ENCODE measurements at regions of chr12 and their contacts with region 1.

Region 1: DNA sequence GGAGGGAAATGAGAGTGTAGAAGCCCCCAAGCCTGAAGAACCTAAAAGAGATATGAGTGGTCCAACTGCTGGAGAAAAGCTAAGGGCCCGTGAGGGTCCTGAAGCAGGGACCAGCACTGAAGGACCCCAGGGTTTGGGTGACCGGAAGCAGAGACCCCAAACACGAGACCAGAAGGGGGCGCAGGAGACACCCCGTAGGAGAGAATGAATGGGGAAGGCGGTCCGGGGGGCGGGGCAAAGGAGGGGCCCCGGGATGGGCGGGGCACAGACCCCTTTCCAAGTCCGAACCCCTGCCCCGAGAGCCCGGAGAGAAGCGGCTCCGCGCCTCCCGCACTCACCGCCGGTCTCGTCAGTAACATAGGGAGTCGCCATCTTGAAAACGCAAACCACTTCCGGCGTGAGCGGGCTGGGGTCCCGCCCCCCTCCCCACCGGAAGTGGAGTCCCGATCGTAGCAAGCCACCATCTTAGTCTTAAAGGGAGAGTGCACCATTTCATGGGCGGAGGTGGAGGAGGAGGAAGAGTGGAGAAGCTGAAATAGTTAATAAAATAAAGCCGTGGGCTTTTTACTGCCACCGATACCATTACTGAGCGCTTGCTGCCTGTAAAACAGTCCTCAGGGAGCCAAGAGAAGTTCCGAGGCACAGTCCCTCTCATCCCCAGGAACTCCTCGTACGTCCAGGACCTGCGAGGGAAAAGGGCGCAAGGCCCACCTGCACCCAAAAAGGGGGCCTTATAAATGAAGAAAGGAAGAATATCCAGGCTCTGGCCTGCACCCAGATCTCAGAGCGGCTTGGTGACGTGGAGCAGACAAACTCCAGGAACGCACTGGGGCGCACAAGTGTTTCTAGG is 731 bp downstream of the PYM1 start:
- DNase-seq: peak; percentile 92 to 94
- ATAC-seq: peak; percentile 92
- H3K4me3 ChIP-seq: peak overlapping the region; percentile 67 to 92
- H3K27ac ChIP-seq: peak overlapping the region; percentile 34 to 98
- H3K4me1 ChIP-seq: peaks cover 0 to 3% of the 10 kb centered on the region in 2 donors
- H3K27me3 ChIP-seq: no peaks in the 10 kb centered on the region

Region 2: DNA sequence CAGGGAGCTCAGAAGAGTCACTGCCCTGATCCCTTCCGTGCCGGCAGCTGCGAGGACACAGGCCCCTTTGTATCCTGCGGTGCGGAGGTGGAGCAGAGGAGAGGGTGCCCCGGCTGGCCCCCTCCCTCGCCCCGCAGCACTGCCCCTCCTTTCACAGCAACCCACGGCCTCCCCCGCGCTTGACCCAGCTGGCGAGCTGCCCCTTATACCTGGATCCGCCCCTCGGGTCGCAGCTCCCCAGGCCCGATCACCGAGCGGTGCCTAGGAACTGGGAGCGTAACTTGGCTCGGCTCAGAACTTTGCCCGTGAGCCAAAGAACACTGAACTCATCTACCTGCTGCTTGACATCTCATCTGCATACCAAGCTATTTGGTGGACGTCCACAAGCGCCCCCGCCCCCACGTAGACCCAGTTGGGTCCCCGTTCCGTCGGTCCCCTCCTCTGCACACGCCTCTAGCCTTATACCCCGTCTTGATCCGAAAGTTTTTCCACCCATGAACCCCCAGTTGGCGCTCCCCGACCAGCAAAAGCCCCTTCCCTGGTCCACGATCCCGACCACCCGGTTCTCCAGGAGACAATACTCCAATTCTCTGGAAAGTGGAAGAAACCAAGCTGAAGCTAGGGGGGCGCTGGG is 96.9 kb before region 1 on chr12:
- intact Hi-C with region 1: loop called (anchors 2 to 5 kb)
- DNase-seq: peak; percentile 69 to 86
- ATAC-seq: peak; percentile 57
- H3K4me3 ChIP-seq: peak overlapping the region; percentile 77 to 79
- H3K27ac ChIP-seq: peak overlapping the region; percentile 78 to 91
- H3K4me1 ChIP-seq: peaks cover 0 to 3% of the 10 kb centered on the region in 2 donors
- H3K27me3 ChIP-seq: no peaks in the 10 kb centered on the region

Region 3: GRCh38 chr12:55847603-55848291 is 79.2 kb before region 1 on chr12:
- intact Hi-C with region 1: loop called in 1 of 2 experiments (anchors 5 kb)
- DNase-seq: peak; percentile 96
- ATAC-seq: peak; percentile 95
- H3K4me3 ChIP-seq: no peak overlapping the region
- H3K27ac ChIP-seq: peak overlapping the region; percentile 97 to 100
- H3K4me1 ChIP-seq: peaks cover 0 to 2% of the 10 kb centered on the region in 2 donors
- H3K27me3 ChIP-seq: no peaks in the 10 kb centered on the region

Region 4: GRCh38 chr12:55973598-55974307 is 46.8 kb after region 1 on chr12 and contains the start of gene RAB5B:
- intact Hi-C with region 1: loop called in 1 of 2 experiments (anchors 5 kb)
- DNase-seq: peak; percentile 98 to 100
- ATAC-seq: peak; percentile 97
- H3K4me3 ChIP-seq: peak within 1 kb of the TSS; percentile 78 to 98
- H3K27ac ChIP-seq: peak within 1 kb of the TSS in 1 of 2 donors; percentile 94
- H3K4me1 ChIP-seq: peaks cover 0 to 3% of the 10 kb centered on the region in 2 donors
- H3K27me3 ChIP-seq: no peaks in the 10 kb centered on the region
- total RNA-seq, gene RAB5B: 115 to 126 TPM

Region 5: DNA sequence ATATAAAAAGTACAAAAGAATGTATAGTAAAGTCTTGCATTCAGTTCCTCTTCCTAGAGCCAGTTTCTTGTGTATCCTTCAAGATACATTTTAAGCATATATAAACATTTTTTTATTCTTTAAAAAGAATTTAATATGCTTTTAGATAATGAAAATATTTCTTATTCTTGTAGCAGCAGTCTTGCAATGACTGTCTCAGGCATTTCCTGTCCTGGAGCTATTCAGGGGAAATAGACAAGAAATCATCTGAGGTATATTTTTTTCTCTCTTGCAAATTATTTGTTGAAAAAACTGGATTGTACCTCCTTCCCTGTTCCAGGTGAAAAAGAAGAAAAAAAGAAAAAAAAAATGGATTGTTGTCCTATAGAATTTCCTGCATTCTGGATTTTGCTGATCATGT is 136.0 kb after region 1 on chr12:
- intact Hi-C with region 1: no loop called
- DNase-seq: no peak
- ATAC-seq: no peak
- H3K4me3 ChIP-seq: no peak overlapping the region
- H3K27ac ChIP-seq: no peak overlapping the region
- H3K4me1 ChIP-seq: no peaks in the 10 kb centered on the region
- H3K27me3 ChIP-seq: no peaks in the 10 kb centered on the region

Measured in aorta (tissue), 5 donors.